PC-9 (cell line): ENCODE measurements at regions of chr11 and their contacts with region 1.

Region 1: DNA sequence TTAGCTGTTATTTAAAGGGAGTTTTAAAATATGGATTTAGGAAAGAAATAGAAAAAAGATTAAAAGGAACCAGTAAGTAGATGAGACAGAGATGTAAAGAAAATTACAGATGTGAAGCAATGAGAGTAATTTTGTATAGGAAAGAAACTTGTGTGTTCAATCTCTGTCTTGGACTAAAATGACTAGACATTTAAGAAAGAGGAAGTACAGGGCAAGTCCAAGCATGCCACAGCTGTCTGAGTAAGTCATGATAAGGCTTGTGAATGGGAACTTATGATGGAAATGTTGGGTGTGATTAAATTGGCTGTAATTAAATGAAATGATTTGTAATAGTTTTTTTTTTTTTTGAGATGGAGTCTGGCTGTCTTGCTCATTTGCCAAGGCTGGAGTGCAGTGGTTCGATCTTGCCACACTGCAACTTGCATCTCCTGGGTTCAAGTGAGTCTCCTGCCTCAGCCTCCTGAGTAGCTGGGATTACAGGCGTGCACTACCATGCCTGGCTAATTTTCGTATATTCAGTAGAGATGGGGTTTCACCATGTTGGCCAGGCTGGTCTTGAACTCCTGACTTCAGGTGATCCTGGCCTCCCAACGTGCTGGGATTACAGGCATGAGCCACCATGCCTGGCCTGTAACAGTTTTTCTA is 5.9 kb upstream of the ACY3 start:
- DNase-seq: no peak
- H3K4me3 ChIP-seq: no peak overlapping the region
- H3K27ac ChIP-seq: no peak overlapping the region
- H3K4me1 ChIP-seq: no peaks in the 10 kb centered on the region
- H3K27me3 ChIP-seq: no peaks in the 10 kb centered on the region
- CTCF ChIP-seq: no peak

Region 2: DNA sequence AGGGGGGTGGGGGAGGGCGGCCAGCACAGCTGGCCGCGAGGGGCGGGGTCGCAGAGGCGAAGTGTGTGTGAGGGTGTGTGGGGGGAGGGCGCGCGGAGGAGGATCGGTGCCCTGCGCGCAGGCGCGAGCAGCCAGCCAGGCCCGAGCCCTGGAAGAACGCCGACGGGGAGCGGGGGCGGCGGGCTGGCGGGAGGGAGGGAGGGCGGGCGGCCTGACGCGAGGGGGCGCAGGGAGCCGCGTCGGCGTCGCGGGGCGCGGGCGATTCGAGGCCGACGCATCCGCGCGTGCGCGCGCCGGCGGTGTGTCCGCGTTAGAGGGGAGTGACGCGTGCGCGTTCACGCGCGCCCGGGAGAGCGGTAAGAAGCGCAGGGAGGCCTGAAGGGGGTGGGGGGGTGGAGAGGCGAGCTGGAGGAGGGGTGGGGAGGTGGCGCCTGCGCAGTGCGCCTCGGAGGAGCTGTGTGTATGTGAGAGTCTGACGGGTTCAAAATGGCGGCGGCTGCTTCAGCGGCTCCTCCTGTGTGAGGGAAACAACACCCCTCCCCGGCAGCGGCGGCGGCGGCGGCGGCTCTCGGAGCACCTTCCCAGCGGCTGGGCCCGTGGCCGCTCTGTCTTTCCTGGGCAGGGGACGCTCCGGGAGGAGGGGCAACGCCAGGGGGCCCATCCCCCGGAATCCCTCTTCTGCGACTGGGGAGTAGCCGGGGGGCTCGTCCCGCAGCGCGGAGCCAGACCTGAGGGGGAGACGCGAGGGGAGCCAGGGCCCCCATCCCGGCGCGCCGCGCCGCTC is 537.4 kb before region 1 on chr11 and contains the start of gene KDM2A:
- CTCF ChIA-PET with region 1: no interaction called
- POLR2A ChIA-PET with region 1: no interaction called
- intact Hi-C with region 1: no loop called
- DNase-seq: peak; percentile 91 to 98
- H3K4me3 ChIP-seq: peak within 1 kb of the TSS; percentile 83
- H3K27ac ChIP-seq: peak within 1 kb of the TSS; percentile 82
- H3K4me1 ChIP-seq: peaks cover 13% of the 10 kb centered on the region
- H3K27me3 ChIP-seq: no peaks in the 10 kb centered on the region
- CTCF ChIP-seq: no peak
- total RNA-seq, gene KDM2A: 117 and 120 TPM in 2 replicates

Region 3: DNA sequence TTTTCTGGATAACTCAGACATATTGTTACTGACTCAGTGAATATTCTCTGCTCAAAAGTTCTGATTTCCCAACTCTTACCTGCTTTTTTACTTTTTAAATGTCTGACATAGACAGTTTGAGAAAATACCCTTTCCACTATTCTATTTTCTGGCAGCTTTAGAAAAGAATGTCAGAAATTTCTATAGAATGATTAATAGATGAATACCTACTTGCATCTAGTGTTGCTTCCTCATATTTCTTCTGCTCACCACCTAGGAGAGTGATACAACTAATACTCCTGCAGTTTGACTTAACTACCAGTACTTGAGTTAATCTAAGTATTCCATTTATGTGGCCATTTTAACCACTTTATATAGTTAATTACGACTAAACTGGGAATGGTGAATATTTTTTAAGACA is 482.1 kb before region 1 on chr11:
- CTCF ChIA-PET with region 1: no interaction called
- POLR2A ChIA-PET with region 1: no interaction called
- intact Hi-C with region 1: no loop called
- DNase-seq: peak in 1 of 2 experiments; percentile 69
- H3K4me3 ChIP-seq: no peak overlapping the region
- H3K27ac ChIP-seq: peak overlapping the region; percentile 48
- H3K4me1 ChIP-seq: peaks cover 15% of the 10 kb centered on the region
- H3K27me3 ChIP-seq: no peaks in the 10 kb centered on the region
- CTCF ChIP-seq: no peak

Region 4: GRCh38 chr11:67391304-67392132 is 264.9 kb before region 1 on chr11 and contains the start of gene RAD9A:
- CTCF ChIA-PET with region 1: no interaction called
- POLR2A ChIA-PET with region 1: no interaction called
- intact Hi-C with region 1: no loop called
- DNase-seq: peak; percentile 82 to 94
- H3K4me3 ChIP-seq: peak within 1 kb of the TSS; percentile 89
- H3K27ac ChIP-seq: peak within 1 kb of the TSS; percentile 54
- H3K4me1 ChIP-seq: peaks cover 12% of the 10 kb centered on the region; the same call in 1 of the 2 replicates
- H3K27me3 ChIP-seq: no peaks in the 10 kb centered on the region
- CTCF ChIP-seq: no peak
- total RNA-seq, gene RAD9A: 62.8 and 79.8 TPM in 2 replicates

Region 5: DNA sequence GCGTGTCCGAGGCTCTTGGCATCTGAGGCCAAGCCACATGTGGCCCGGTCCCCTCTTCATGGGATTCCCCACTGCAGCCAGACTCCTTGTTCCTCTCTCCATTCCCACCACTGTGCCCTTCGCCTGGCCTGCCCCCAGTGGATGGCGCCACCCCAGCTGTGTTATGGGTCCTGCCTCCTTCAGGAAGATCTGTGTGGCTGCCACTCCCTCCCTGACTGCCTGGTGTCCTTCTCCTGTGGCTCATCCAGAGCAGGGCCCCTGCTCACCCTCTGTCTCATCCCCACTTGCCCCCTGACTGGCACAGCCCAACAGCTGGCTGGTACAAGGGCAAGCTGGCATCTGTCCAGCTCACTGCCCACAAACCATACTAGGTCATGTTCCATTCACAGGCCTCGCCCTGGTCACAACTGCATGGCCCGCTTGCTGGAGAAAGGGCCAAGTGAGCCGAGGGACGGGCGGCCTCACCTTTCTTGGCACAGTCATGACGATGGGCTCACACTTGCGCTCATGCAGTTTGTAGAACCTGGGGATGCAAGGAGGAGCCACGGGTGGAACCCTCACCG is 217.0 kb before region 1 on chr11:
- CTCF ChIA-PET with region 1: interaction called, 17 read pairs
- POLR2A ChIA-PET with region 1: no interaction called
- intact Hi-C with region 1: no loop called
- DNase-seq: peak in 1 of 2 experiments; percentile 52
- H3K4me3 ChIP-seq: no peak overlapping the region
- H3K27ac ChIP-seq: no peak overlapping the region
- H3K4me1 ChIP-seq: peaks cover 10% of the 10 kb centered on the region
- H3K27me3 ChIP-seq: no peaks in the 10 kb centered on the region
- CTCF ChIP-seq: peak; percentile 41; the same call in 1 of the 2 replicates

Region 6: DNA sequence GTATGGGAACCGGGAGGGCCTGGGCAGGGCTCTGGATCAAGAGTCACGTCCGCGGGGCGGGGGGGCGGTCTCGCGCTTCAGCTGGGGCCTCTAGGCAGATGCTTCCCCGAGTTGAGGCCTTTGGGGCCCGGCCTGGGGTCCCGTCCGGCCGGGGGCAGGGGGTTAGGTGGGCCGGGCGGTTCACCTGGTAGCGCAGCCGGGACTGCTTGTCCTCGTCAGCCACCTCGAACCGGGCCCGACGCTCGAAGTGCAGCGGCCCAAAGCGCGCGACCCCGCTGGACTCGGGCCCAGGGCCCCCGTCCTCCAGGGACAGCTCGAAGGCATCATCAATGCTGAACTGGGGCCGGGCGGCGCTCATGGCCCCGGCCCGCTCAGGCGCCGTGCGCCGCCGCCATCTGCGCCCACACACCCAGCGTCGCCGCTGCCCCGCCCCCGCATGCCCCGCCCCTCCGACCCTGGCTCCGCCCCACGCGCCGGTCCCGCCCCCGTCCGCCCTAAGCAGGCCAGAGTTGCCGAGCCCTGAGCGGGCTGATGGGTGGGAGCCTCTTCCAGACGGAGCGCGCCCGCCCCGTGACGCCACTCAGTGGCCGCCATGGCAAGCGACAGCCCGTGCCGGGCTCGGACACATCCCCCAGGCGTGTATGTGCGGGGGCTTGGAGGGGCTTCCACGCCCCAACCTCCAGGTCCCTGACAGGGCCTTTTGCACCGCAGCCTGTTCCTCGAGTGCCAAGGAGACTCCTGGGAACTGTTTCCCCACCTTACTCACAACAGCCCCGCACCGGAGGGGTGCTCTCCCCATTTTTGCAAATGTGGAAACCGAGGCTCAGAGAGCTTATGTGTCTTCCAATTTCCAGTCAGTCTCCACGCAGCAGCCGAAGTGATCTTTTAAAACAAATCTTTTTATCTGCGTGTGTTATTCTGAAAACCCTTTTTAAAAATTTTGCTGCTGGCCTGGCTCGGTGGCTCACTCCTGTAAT is 187.3 kb before region 1 on chr11 and contains the start of gene TMEM134:
- CTCF ChIA-PET with region 1: no interaction called
- POLR2A ChIA-PET with region 1: no interaction called
- intact Hi-C with region 1: no loop called
- DNase-seq: peak; percentile 80 to 91
- H3K4me3 ChIP-seq: peak within 1 kb of the TSS; percentile 92
- H3K27ac ChIP-seq: peak within 1 kb of the TSS; percentile 48
- H3K4me1 ChIP-seq: peaks cover 32% of the 10 kb centered on the region
- H3K27me3 ChIP-seq: no peaks in the 10 kb centered on the region
- CTCF ChIP-seq: peak; percentile 48
- total RNA-seq, gene TMEM134: 85.7 and 125 TPM in 2 replicates

Region 7: GRCh38 chr11:67572747-67573419 is 83.5 kb before region 1 on chr11:
- CTCF ChIA-PET with region 1: interaction called, 3 read pairs
- POLR2A ChIA-PET with region 1: no interaction called
- intact Hi-C with region 1: loop called (anchors 2 kb)
- DNase-seq: peak; percentile 65 to 72
- H3K4me3 ChIP-seq: no peak overlapping the region
- H3K27ac ChIP-seq: peak overlapping the region; percentile 34
- H3K4me1 ChIP-seq: peaks cover 14% of the 10 kb centered on the region
- H3K27me3 ChIP-seq: no peaks in the 10 kb centered on the region
- CTCF ChIP-seq: peak; percentile 87